AG04449 (cell line): ENCODE measurements at regions of chr2 and their contacts with region 1.

Region 1: GRCh38 chr2:64653349-64654062 is at the start of gene SERTAD2:
- DNase-seq: no peak
- H3K4me3 ChIP-seq: peak within 1 kb of the TSS; percentile 77
- CTCF ChIP-seq: no peak

Region 2: GRCh38 chr2:64516628-64517510 is 136.6 kb before region 1 on chr2:
- CTCF ChIA-PET with region 1: no interaction called
- POLR2A ChIA-PET with region 1: no interaction called
- DNase-seq: no peak
- H3K4me3 ChIP-seq: no peak overlapping the region
- CTCF ChIP-seq: no peak

Region 3: GRCh38 chr2:64695721-64696261 is 42.3 kb after region 1 on chr2:
- CTCF ChIA-PET with region 1: interaction called, 14 read pairs
- POLR2A ChIA-PET with region 1: interaction called, 4 read pairs
- DNase-seq: no peak
- H3K4me3 ChIP-seq: no peak overlapping the region
- CTCF ChIP-seq: no peak

Region 4: GRCh38 chr2:64767670-64768468 is 114.4 kb after region 1 on chr2:
- CTCF ChIA-PET with region 1: interaction called, 3 read pairs
- POLR2A ChIA-PET with region 1: interaction called, 10 read pairs
- DNase-seq: peak; percentile 59
- H3K4me3 ChIP-seq: peak overlapping the region; percentile 63
- CTCF ChIP-seq: no peak

Region 5: GRCh38 chr2:64859312-64860212 is 206.1 kb after region 1 on chr2:
- CTCF ChIA-PET with region 1: interaction called, 32 read pairs
- POLR2A ChIA-PET with region 1: interaction called, 35 read pairs
- DNase-seq: peak; percentile 80
- H3K4me3 ChIP-seq: peak overlapping the region; percentile 42
- CTCF ChIP-seq: no peak

Region 6: DNA sequence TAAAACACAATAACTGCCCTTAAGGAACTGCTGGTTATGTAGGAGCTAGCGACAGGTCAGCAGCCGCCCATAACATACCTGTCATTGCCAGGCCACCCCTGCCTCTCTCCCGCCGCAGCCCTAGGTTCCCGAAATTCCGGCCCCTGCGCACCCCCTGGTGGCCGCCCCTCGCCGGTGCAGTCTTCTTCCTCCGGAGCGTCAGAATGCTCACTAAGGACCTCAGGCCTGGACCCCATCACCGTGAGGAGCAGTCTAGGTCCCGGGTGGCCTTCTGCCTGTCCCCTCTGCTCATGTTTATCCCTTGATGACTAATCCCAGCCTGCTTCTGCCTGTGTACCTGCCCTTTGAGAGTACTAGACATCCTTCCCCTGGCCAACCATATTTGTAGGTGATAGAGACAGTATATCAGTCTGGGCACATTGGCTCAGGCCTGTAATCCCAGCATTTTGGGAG is 220.0 kb after region 1 on chr2:
- CTCF ChIA-PET with region 1: interaction called, 128 read pairs
- POLR2A ChIA-PET with region 1: interaction called, 3 read pairs
- DNase-seq: no peak
- H3K4me3 ChIP-seq: no peak overlapping the region; the same call in 1 of the 2 replicates
- CTCF ChIP-seq: peak; percentile 97